ENCODE measurements at regions of chr7 and their contacts with region 1.

Region 1: DNA sequence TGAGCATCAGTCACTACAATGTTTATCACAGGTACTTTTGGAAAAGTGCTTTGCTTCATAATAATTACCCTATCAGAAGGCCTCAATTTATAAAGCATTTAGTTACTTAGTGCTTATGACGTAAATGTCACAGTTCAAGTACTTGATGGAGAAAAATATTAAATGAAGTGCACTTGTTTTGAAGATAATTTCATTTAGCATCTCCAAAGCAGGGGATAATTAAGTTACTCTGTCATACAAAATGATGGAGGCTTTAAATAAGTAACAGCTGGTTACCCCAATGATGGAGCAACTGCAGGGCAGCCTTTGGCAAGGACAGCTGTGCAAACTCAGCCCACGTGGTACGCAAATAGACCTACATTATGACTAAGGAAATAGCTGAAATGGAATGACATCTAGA is 768.8 kb downstream of the GRM8 start:
- DNase-seq: no peak
- ATAC-seq: no peak
- H3K4me3 ChIP-seq: no peak overlapping the region
- H3K4me3 Mint-ChIP-seq: no peak overlapping the region
- H3K27ac ChIP-seq: no peak overlapping the region
- H3K27ac Mint-ChIP-seq: no peak overlapping the region
- H3K4me1 ChIP-seq: no peaks in the 10 kb centered on the region
- H3K4me1 Mint-ChIP-seq: no peaks in the 10 kb centered on the region
- H3K27me3 ChIP-seq: no peaks in the 10 kb centered on the region
- H3K27me3 Mint-ChIP-seq: no peaks in the 10 kb centered on the region
- CTCF ChIP-seq: no peak

Region 2: GRCh38 chr7:126501616-126502015 is 17.6 kb after region 1 on chr7:
- CTCF ChIA-PET with region 1: no interaction called
- POLR2A ChIA-PET with region 1: no interaction called
- intact Hi-C with region 1: loop called in 1 of 2 experiments (anchors 1 kb)
- DNase-seq: no peak
- ATAC-seq: no peak
- H3K4me3 ChIP-seq: no peak overlapping the region
- H3K4me3 Mint-ChIP-seq: no peak overlapping the region
- H3K27ac ChIP-seq: no peak overlapping the region
- H3K27ac Mint-ChIP-seq: no peak overlapping the region
- H3K4me1 ChIP-seq: no peaks in the 10 kb centered on the region
- H3K4me1 Mint-ChIP-seq: no peaks in the 10 kb centered on the region
- H3K27me3 ChIP-seq: no peaks in the 10 kb centered on the region
- H3K27me3 Mint-ChIP-seq: no peaks in the 10 kb centered on the region
- CTCF ChIP-seq: no peak

Region 3: DNA sequence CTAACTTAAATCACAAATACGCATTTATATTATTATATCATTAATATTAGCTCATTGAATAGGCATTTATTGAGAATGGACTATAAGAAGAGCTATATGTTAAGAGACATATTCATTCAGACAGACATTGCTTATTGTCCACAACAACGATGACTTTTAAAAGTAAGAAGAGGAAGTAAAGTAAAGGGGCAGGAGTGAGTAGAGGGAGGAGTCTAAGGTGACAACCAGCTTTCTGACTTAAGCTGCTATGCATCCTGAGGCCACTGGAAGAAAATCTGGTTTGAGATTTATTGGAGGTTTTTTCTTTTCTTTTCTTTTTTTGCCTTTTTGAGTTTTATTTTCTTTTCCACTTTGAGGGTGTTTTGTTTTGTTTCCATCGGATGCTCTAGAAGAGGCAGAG is 45.3 kb after region 1 on chr7:
- CTCF ChIA-PET with region 1: no interaction called
- POLR2A ChIA-PET with region 1: no interaction called
- intact Hi-C with region 1: no loop called
- DNase-seq: no peak
- ATAC-seq: no peak
- H3K4me3 ChIP-seq: no peak overlapping the region
- H3K4me3 Mint-ChIP-seq: no peak overlapping the region
- H3K27ac ChIP-seq: no peak overlapping the region
- H3K27ac Mint-ChIP-seq: no peak overlapping the region
- H3K4me1 ChIP-seq: no peaks in the 10 kb centered on the region
- H3K4me1 Mint-ChIP-seq: no peaks in the 10 kb centered on the region
- H3K27me3 ChIP-seq: no peaks in the 10 kb centered on the region
- H3K27me3 Mint-ChIP-seq: no peaks in the 10 kb centered on the region
- CTCF ChIP-seq: no peak